Motor neuron (in vitro differentiated cells): ENCODE measurements at regions of chr20 and their contacts with region 1.

Region 1: DNA sequence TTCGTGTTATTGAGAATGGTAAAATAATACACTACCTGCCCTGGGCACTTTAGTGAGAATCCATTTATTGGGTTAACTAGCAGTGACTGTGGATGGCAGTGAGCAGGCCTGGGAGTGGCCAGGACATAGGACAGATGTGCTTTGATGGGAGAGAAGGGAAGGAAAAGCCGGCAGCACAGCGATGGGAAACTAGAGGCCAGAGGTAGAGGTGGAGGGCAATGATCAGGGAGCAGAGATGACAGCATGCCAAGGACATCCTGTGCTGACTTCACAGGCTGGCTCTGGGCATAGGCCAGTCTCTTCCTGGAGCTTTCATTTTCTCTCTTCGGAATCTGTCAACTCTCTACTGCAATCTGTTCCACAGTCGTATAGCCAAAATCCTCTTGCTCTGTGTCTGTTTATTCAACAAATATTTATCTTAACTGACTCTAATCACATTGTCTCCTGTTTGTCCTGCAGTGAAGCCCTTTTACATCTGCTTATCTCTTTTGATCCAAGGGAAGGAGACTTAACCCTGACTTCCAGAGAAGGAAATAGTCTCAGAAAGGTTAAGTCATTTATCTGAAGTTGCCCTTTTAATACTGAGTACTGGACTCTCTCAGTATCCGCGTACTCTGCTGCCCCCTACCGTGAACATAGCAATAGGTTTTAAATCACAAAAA is 18.4 kb upstream of the MMP24 start:
- ATAC-seq: peak in 7 of 8 experiments; percentile 37 to 100 (median 87)
- H3K4me3 ChIP-seq: no peak overlapping the region
- H3K27ac ChIP-seq: no peak overlapping the region
- H3K4me1 ChIP-seq: no peaks in the 10 kb centered on the region

Region 2: GRCh38 chr20:34621383-34622367 is 586.4 kb before region 1 on chr20:
- in situ Hi-C with region 1: no loop called
- ATAC-seq: no peak
- H3K4me3 ChIP-seq: no peak overlapping the region
- H3K27ac ChIP-seq: no peak overlapping the region
- H3K4me1 ChIP-seq: peaks cover 0 to 8% of the 10 kb centered on the region in 2 donors

Region 3: DNA sequence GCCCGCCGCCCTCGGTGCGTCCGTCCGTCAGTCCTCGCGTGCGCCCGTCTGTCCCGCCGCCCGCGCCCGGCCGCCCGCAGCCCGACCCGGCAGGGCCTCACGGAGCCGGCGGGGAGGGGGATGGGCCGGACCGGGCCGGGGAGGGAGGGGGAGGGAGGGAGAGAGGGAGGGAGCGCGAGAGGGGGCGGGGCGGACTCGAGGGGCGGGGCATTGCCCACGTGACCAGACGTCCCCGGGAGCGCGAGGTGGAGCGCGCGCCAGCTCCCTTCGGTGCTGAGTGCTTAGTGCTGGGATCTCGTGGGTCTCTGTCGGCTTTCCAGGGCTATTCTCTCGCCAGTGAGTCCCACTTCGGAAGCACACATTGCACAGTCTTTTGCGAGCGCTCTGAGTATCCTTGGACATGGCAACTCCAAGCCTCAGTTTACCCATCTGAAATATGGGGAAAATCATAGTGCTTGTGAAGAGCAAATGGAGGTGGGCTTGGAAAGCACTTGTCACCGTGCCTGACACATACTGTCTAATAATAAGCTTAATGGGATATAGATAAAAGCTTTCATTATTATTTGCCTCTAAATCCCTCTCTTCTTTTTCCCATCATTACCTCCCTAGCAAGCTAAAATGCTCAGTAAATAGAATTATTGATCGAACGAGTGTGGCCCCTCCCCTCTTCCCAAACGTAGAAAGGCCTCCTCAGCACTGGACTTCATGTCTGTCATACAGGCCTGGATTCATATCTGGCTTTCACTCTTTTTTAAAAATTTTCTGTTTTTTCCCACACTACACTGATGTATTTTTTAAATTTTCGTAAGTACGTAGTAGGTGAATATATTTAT is 382.3 kb before region 1 on chr20 and contains the start of gene NCOA6:
- in situ Hi-C with region 1: loop called in 1 of 9 experiments (anchors 25 kb)
- ATAC-seq: peak; percentile 60 to 76 (median 68)
- H3K4me3 ChIP-seq: peak within 1 kb of the TSS; percentile 83 to 99 (median 94)
- H3K27ac ChIP-seq: peak within 1 kb of the TSS; percentile 97 to 99
- H3K4me1 ChIP-seq: peaks cover 0 to 3% of the 10 kb centered on the region in 2 donors
- total RNA-seq, gene NCOA6: 6.6 to 25.6 (median 19.2) TPM

Region 4: DNA sequence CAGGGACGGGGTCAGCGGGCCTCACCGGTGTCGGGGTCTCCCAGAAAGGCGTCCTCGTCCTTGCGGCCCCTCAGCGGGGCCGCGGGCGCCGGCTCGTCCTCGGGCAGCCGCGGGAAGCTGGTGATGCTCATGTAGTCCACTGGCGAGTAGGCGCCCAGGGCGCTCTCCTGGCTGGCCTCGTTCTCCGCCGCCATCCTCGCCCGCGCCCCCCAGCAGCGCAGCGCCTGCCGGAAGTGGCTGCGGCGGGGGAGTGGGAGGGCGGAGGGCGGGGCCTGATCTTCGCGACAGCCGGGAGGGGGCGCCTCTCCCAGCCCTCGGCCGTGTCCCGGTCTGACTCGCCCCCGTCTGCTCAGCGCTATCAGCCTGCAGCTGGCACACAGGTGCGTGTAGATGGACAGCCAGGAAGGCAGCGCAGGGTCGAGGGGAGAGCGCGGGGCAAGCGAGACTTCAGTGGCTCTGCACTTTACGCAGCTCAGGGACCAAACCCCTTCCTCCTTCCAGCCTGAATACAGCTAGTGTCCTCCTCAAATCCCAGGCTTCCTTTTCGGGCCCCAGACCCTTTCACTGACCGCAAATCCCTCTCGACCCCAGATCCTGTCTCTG is 335.4 kb before region 1 on chr20 and contains the start of gene GGT7:
- in situ Hi-C with region 1: loop called in 1 of 9 experiments (anchors 25 kb)
- ATAC-seq: peak; percentile 10 to 65 (median 60)
- H3K4me3 ChIP-seq: peak within 1 kb of the TSS; percentile 47 to 59 (median 50)
- H3K27ac ChIP-seq: peak within 1 kb of the TSS in 1 of 2 donors; percentile 12
- H3K4me1 ChIP-seq: peaks cover 5 to 8% of the 10 kb centered on the region in 2 donors
- total RNA-seq, gene GGT7: 8.3 to 29.5 (median 23.2) TPM